ENCODE measurements at regions of chr19 and their contacts with region 1.

Region 1: GRCh38 chr19:41449079-41449864 is 6.3 kb downstream of the ERICH4 start:
- DNase-seq: peak; percentile 89
- ATAC-seq: peak; percentile 94
- H3K4me3 Mint-ChIP-seq: peak overlapping the region; percentile 70
- H3K27ac Mint-ChIP-seq: no peak overlapping the region
- H3K4me1 Mint-ChIP-seq: peaks cover 3% of the 10 kb centered on the region
- H3K27me3 Mint-ChIP-seq: peaks cover 62% of the 10 kb centered on the region
- CTCF ChIP-seq: peak; percentile 96

Region 2: DNA sequence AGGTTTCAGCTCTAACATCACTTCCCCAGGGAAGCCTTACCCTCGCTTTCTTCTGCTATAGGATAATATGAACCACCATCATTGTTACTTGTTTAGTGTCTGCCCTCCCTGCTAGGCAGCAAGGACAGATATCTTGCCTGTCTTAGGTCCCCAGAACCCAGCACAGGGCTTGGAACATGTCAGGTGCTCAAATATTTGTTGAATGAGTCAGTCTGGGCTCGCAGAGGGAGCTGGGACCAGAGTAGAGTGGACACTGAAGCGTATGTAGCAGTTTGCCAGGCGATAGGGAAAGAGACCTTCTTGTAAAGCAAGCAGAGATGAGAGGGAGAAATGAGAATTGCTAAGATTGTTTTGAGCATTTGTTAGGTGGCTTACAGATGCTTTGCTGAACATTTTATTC is 40.0 kb before region 1 on chr19:
- CTCF ChIA-PET with region 1: interaction called, 24 read pairs
- POLR2A ChIA-PET with region 1: no interaction called
- DNase-seq: no peak
- ATAC-seq: no peak
- H3K4me3 Mint-ChIP-seq: no peak overlapping the region
- H3K27ac Mint-ChIP-seq: peak overlapping the region; percentile 22; the same call in 1 of the 2 replicates
- H3K4me1 Mint-ChIP-seq: peaks cover 13% of the 10 kb centered on the region
- H3K27me3 Mint-ChIP-seq: no peaks in the 10 kb centered on the region
- CTCF ChIP-seq: no peak

Region 3: DNA sequence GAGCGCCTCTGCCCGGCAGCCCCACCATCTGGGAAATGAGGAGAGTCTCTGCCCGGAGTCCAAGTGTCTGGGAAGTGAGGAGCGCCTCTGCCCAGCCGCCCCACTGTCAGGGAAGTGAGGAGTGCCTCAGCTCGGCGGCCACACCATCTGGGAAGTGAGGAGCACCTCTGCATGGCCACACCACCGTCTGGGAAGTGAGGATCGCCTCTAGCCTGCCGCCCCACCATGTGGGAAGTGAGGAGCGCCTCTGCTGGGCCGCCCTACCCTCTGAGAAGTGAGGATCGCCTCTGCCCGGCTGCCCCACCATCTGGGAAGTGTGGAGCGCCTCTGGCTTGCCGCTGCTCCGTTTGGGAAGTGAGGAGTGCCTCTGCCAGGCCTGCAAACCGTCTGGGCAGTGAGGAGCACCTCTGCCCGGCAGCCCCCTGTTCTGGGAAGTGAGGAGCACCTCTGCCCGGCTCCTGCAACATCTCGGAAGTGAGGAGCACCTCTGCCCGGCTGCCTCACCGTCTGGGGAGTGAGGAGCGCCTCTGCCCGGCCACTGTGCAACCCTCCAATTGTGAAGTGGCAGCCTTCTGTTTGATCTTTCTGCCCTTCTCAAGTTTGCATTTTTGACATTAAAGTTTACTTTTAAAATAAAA is 65.9 kb after region 1 on chr19:
- CTCF ChIA-PET with region 1: no interaction called
- POLR2A ChIA-PET with region 1: no interaction called
- DNase-seq: peak; percentile 16
- ATAC-seq: peak; percentile 48; the same call in 1 of the 2 replicates
- H3K4me3 Mint-ChIP-seq: no peak overlapping the region; the same call in 1 of the 2 replicates
- H3K27ac Mint-ChIP-seq: no peak overlapping the region
- H3K4me1 Mint-ChIP-seq: no peaks in the 10 kb centered on the region
- H3K27me3 Mint-ChIP-seq: peaks cover 92% of the 10 kb centered on the region
- CTCF ChIP-seq: no peak

Region 4: DNA sequence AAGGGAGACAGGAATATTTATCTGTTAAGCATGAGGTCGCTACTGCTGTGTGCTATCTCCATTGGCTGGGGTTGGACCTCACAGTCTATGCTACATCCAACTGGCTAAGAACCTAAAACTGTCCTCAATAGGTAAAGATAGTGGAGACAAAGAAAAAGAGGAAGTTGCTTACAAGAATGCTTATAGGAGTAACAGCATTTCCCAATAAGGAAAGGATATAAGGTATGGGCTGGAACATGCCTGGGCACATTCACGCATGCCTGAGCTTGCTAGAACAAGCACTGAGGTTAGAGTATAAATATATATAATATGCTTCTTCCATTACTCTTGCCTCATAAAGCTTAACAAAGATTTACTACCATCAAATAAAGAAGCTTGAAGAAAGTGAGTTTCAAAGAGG is 78.8 kb after region 1 on chr19:
- CTCF ChIA-PET with region 1: interaction called, 12 read pairs
- POLR2A ChIA-PET with region 1: interaction called, 3 read pairs
- DNase-seq: no peak
- ATAC-seq: peak; percentile 51
- H3K4me3 Mint-ChIP-seq: no peak overlapping the region
- H3K27ac Mint-ChIP-seq: peak overlapping the region; percentile 74; the same call in 1 of the 2 replicates
- H3K4me1 Mint-ChIP-seq: peaks cover 17% of the 10 kb centered on the region
- H3K27me3 Mint-ChIP-seq: peaks cover 83% of the 10 kb centered on the region
- CTCF ChIP-seq: no peak

Region 5: GRCh38 chr19:41548954-41549688 is 99.8 kb after region 1 on chr19:
- CTCF ChIA-PET with region 1: interaction called, 22 read pairs
- POLR2A ChIA-PET with region 1: no interaction called
- DNase-seq: no peak
- ATAC-seq: peak; percentile 86
- H3K4me3 Mint-ChIP-seq: peak overlapping the region; percentile 60
- H3K27ac Mint-ChIP-seq: peak overlapping the region; percentile 95
- H3K4me1 Mint-ChIP-seq: peaks cover 44% of the 10 kb centered on the region
- H3K27me3 Mint-ChIP-seq: peaks cover 14% of the 10 kb centered on the region
- CTCF ChIP-seq: no peak

Region 6: GRCh38 chr19:41597600-41598041 is 148.3 kb after region 1 on chr19:
- CTCF ChIA-PET with region 1: interaction called, 33 read pairs
- POLR2A ChIA-PET with region 1: no interaction called
- DNase-seq: peak; percentile 80
- ATAC-seq: peak; percentile 84
- H3K4me3 Mint-ChIP-seq: no peak overlapping the region
- H3K27ac Mint-ChIP-seq: no peak overlapping the region
- H3K4me1 Mint-ChIP-seq: peaks cover 16% of the 10 kb centered on the region
- H3K27me3 Mint-ChIP-seq: peaks cover 78% of the 10 kb centered on the region
- CTCF ChIP-seq: peak; percentile 96

Region 7: GRCh38 chr19:41682386-41682785 is 233.1 kb after region 1 on chr19:
- CTCF ChIA-PET with region 1: no interaction called
- POLR2A ChIA-PET with region 1: no interaction called
- DNase-seq: no peak
- ATAC-seq: no peak
- H3K4me3 Mint-ChIP-seq: no peak overlapping the region
- H3K27ac Mint-ChIP-seq: no peak overlapping the region
- H3K4me1 Mint-ChIP-seq: no peaks in the 10 kb centered on the region
- H3K27me3 Mint-ChIP-seq: peaks cover 27% of the 10 kb centered on the region
- CTCF ChIP-seq: no peak

Measured in WTC11 (cell line).